Prostate gland (tissue), 2 donors: ENCODE measurements at regions of chr15 and their contacts with region 1.

Region 1: DNA sequence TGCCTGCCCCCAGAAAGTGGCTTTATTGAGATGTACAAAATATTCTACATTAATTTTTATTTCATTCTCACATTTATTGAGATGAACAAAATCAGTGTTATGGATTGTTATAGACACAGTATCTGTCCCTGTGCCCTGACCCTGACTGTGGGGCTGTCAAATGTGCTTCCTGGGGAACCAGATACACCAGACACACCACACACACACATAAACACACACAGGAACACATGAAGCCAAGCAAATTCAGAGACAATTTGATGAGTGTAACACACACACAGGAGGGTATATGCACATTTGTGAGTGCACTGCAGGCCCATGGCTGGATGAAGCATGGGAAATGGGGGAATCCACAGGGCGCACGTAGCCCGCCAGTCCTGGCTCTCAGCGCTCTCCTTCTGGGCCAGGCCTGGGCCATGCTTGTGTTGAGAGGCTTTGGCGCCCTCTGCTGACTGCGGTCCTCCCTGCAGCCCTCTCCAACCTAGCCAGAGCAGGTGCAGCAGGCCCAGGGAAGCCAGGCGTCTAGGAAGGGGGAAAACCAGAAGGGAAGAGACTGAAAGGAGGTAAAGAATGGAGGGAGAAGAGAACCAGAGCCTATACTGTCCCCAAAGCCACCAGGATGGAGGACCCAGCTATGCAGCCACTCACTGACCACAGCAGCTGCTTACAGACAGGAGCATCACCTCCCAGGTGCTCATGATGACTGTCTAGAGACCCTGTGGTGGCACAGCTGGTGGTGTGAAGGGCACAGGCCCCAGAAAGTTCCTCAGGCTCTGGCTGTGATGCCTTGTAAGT is 18.0 kb upstream of the LOXL1 start:
- DNase-seq: peak; percentile 70
- H3K4me3 ChIP-seq: no peak overlapping the region
- H3K27ac ChIP-seq: no peak overlapping the region
- H3K4me1 ChIP-seq: no peaks in the 10 kb centered on the region
- H3K27me3 ChIP-seq: no peaks in the 10 kb centered on the region
- CTCF ChIP-seq: peak; percentile 66 to 91 (median 78)
- POLR2A ChIP-seq: no peak

Region 2: GRCh38 chr15:73704869-73705645 is 203.2 kb before region 1 on chr15:
- intact Hi-C with region 1: loop called (anchors 5 kb)
- DNase-seq: peak; percentile 46
- H3K4me3 ChIP-seq: no peak overlapping the region
- H3K27ac ChIP-seq: no peak overlapping the region
- H3K4me1 ChIP-seq: no peaks in the 10 kb centered on the region
- H3K27me3 ChIP-seq: no peaks in the 10 kb centered on the region
- CTCF ChIP-seq: peak; percentile 47 to 84 (median 70)
- POLR2A ChIP-seq: no peak

Region 3: DNA sequence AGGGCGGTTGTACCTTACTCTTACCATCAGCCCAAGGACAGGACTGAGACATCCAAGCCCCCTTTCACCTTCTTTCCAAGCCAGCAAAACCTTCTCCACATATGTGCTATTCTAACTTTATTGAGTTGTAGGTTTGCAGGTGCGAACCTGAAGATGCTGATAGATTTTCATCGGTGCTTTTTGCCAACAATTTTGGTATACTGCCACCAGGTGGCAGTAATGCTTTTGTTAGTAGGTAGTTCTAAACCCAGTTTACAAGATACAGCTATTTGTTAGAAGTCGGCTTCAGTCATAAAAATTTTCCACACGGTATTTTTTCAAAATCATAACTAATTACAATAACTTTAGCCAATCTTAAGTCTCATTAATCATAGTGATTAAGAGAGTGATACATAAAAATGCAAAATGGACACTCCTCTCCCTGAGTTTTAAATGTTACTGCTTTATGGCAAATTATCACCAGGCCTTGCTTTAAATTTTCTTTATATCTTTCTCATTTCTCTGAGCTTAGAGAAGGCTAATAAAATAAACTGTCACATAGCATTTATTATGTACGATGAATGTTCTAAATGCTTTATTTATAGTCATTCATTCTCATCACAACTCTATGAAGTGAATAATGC is 34.2 kb before region 1 on chr15:
- intact Hi-C with region 1: loop called (anchors 5 kb)
- DNase-seq: peak; percentile 17
- H3K4me3 ChIP-seq: no peak overlapping the region
- H3K27ac ChIP-seq: no peak overlapping the region
- H3K4me1 ChIP-seq: no peaks in the 10 kb centered on the region
- H3K27me3 ChIP-seq: no peaks in the 10 kb centered on the region
- CTCF ChIP-seq: peak in 3 of 4 experiments; percentile 59 to 72 (median 64)
- POLR2A ChIP-seq: no peak

Region 4: DNA sequence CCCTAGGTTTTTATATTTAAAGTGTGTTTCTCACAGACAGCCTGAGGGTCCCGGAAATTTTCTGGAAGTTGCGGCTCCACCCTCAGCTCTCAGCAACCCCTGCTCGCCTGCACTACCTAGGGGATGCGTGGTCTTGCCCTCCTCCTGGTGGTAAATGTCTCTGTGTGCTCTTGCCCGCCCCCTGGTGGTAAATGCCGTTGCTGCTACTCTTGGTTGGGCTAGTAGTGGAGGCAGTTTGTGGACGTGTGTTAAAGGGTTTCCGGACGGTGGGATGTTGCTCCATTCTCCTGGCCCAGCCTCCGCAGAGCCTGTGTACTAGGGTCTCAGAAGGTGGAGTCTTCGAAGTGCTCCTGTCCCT is 56.5 kb after region 1 on chr15:
- intact Hi-C with region 1: no loop called
- DNase-seq: peak; percentile 57
- H3K4me3 ChIP-seq: no peak overlapping the region
- H3K27ac ChIP-seq: no peak overlapping the region
- H3K4me1 ChIP-seq: no peaks in the 10 kb centered on the region
- H3K27me3 ChIP-seq: no peaks in the 10 kb centered on the region
- CTCF ChIP-seq: peak; percentile 76 to 92 (median 85)
- POLR2A ChIP-seq: no peak